Heart right ventricle (tissue), 16 donors: ENCODE measurements at regions of chr14 and their contacts with region 1.

Region 1: GRCh38 chr14:102120888-102121287 is 18.8 kb upstream of the WDR20 start:
- DNase-seq: no peak
- ATAC-seq: no peak
- H3K4me3 ChIP-seq: no peak overlapping the region
- H3K27ac ChIP-seq: no peak overlapping the region
- H3K4me1 ChIP-seq: no peaks in the 10 kb centered on the region
- H3K27me3 ChIP-seq: no peaks in the 10 kb centered on the region
- CTCF ChIP-seq: no peak

Region 2: DNA sequence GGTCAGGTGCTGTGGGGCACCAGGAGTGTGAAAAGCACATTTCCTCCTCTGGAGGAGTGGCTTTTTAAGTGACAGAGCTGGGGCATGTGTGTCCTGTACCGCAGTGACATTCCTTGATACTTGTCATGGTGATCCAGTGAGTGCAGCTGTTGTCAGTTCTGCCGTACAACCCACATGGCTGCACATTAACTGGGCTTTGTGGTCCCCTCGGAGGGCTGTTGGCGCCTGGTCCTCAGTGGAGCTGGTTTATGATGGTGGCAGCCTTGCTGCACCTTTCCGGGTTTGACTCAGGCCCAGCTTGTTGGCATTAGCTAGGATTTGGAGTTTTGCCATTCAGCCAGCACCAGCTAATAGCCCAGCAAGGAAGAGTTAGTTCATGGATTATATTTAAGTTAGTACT is 1720.8 kb before region 1 on chr14:
- intact Hi-C with region 1: loop called in 1 of 10 experiments (anchors 5 kb)
- DNase-seq: no peak
- ATAC-seq: peak in 5 of 8 donors; percentile 26 to 73 (median 57)
- H3K4me3 ChIP-seq: no peak overlapping the region
- H3K27ac ChIP-seq: no peak overlapping the region
- H3K4me1 ChIP-seq: peaks cover 0 to 17% (median 4%) of the 10 kb centered on the region in 9 donors
- H3K27me3 ChIP-seq: no peaks in the 10 kb centered on the region
- CTCF ChIP-seq: no peak